GM12878 (cell line): ENCODE measurements at regions of chr7 and their contacts with region 1.

Region 1: GRCh38 chr7:135204341-135204749 is 7.0 kb downstream of the WDR91 start:
- DNase-seq: no peak
- ATAC-seq: no peak
- H3K4me3 ChIP-seq: no peak overlapping the region
- H3K27ac ChIP-seq: 0 out of 2 replicates have a peak overlapping the region, but pooled peaks have one; percentile 37
- H3K4me1 ChIP-seq: peaks cover 40% of the 10 kb centered on the region
- H3K27me3 ChIP-seq: no peaks in the 10 kb centered on the region
- CTCF ChIP-seq: no peak
- EP300 ChIP-seq: no peak
- POLR2A ChIP-seq: no peak
- RAD21 ChIP-seq: no peak

Region 2: GRCh38 chr7:135186841-135187253 is 17.5 kb before region 1 on chr7:
- CTCF ChIA-PET with region 1: interaction called, 108 read pairs
- POLR2A ChIA-PET with region 1: interaction called, 299 read pairs
- RAD21 ChIA-PET with region 1: interaction called, 230 read pairs
- SMC1A ChIA-PET with region 1: interaction called, 251 read pairs
- in situ Hi-C with region 1: no loop called
- intact Hi-C with region 1: loop called (anchors 1 kb)
- DNase-seq: no peak
- ATAC-seq: peak; percentile 77
- H3K4me3 ChIP-seq: peak overlapping the region; percentile 25; the same call in 1 of the 2 replicates
- H3K27ac ChIP-seq: peak overlapping the region; percentile 58
- H3K4me1 ChIP-seq: peaks cover 33% of the 10 kb centered on the region
- H3K27me3 ChIP-seq: no peaks in the 10 kb centered on the region
- CTCF ChIP-seq: peak in 1 of 3 experiments; percentile 24; a peak in 1 of 6 replicates
- EP300 ChIP-seq: peak; percentile 94 to 95; a peak in 3 of 4 replicates
- POLR2A ChIP-seq: peak; percentile 65
- RAD21 ChIP-seq: peak; percentile 27; the same call in 1 of the 2 replicates

Region 3: GRCh38 chr7:135193615-135194081 is 10.7 kb before region 1 on chr7:
- CTCF ChIA-PET with region 1: interaction called, 108 read pairs
- POLR2A ChIA-PET with region 1: interaction called, 299 read pairs
- RAD21 ChIA-PET with region 1: interaction called, 230 read pairs
- SMC1A ChIA-PET with region 1: interaction called, 251 read pairs
- in situ Hi-C with region 1: no loop called
- intact Hi-C with region 1: loop called (anchors 1 kb)
- DNase-seq: no peak
- ATAC-seq: no peak
- H3K4me3 ChIP-seq: no peak overlapping the region
- H3K27ac ChIP-seq: no peak overlapping the region
- H3K4me1 ChIP-seq: peaks cover 9% of the 10 kb centered on the region
- H3K27me3 ChIP-seq: no peaks in the 10 kb centered on the region
- CTCF ChIP-seq: no peak
- EP300 ChIP-seq: no peak
- POLR2A ChIP-seq: no peak
- RAD21 ChIP-seq: no peak

Region 4: GRCh38 chr7:135645296-135645904 is 441.1 kb after region 1 on chr7:
- CTCF ChIA-PET with region 1: no interaction called
- POLR2A ChIA-PET with region 1: no interaction called
- RAD21 ChIA-PET with region 1: no interaction called
- SMC1A ChIA-PET with region 1: no interaction called
- in situ Hi-C with region 1: no loop called
- intact Hi-C with region 1: no loop called
- DNase-seq: no peak
- ATAC-seq: peak; percentile 83
- H3K4me3 ChIP-seq: no peak overlapping the region
- H3K27ac ChIP-seq: no peak overlapping the region
- H3K4me1 ChIP-seq: no peaks in the 10 kb centered on the region
- H3K27me3 ChIP-seq: no peaks in the 10 kb centered on the region
- CTCF ChIP-seq: peak; percentile 56 to 65 (median 62)
- EP300 ChIP-seq: no peak
- POLR2A ChIP-seq: no peak
- RAD21 ChIP-seq: peak; percentile 54